Right cardiac atrium (tissue), 5 donors: ENCODE measurements at regions of chr16 and their contacts with region 1.

Region 1: GRCh38 chr16:4529085-4530060 is 9.2 kb downstream of the CDIP1 start:
- DNase-seq: no peak
- ATAC-seq: peak in 1 of 2 donors; percentile 16
- H3K4me3 ChIP-seq: no peak overlapping the region
- H3K27ac ChIP-seq: no peak overlapping the region
- H3K4me1 ChIP-seq: peaks cover 15% of the 10 kb centered on the region
- H3K27me3 ChIP-seq: no peaks in the 10 kb centered on the region

Region 2: DNA sequence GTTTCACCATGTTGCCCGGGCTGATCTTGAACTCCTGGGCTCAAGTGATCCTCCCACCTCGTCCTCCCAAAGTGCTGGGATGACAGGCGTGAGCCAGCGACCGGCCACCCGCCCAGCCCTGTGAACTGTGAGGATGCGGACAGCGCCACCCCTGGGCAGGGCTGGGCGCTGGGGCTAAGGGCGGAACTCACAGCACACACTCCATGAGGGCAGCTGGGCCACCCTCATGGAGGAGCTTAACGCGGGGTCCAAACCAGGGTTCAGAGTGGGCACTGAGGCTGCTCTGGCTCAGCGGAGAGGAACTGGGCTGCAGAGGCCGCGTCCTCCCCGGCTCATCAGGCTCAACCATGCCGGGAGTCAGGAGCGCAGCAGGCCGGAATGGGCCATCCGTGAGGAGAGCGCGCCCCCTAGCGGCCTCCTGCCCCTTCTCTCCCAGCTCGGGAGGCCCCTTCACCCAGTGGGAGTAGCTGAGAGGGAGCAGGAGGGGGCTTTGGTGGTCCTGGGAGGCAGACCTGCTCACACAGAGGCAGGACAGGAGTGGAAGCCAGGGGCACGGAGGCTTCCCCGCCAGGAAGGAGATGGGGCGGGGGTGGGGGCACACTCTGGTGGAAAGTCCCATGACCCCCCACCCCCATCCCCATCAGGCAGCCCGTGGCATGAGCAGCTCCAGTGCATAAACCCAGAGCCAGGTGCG is 126.8 kb before region 1 on chr16:
- intact Hi-C with region 1: no loop called
- DNase-seq: peak; percentile 85 to 95 (median 94)
- ATAC-seq: peak; percentile 93
- H3K4me3 ChIP-seq: no peak overlapping the region
- H3K27ac ChIP-seq: no peak overlapping the region
- H3K4me1 ChIP-seq: no peaks in the 10 kb centered on the region
- H3K27me3 ChIP-seq: no peaks in the 10 kb centered on the region

Region 3: DNA sequence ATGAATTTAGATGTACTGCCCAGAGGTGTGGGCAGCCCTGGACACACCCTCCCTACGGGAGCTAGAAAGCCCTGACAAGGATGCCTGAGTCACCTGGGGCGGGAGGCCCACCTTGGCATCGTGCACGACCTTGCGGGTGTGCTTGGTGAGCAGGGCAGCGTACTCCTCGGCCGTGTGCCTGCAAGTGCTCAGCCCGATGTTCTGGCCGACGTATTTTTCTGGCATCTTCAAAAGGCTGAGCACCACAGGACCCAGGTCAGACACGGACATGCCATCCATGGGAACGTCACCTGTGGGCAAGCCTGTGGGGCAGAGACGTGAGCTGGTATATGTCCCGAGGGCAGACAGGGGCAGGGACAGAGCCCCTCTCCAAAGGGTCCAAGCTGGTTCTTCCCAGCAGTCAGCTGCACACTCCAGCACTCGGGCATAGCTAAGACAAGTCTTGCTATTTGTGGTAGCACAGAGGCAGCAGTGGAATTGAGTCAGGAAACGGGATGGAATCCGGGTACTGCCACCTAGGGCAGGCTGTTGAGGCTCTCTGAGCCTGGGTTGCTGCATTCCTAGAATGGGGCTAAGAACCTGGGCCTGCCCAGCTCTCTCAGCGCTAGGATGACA is 65.7 kb before region 1 on chr16:
- intact Hi-C with region 1: no loop called
- DNase-seq: no peak
- ATAC-seq: peak in 1 of 2 donors; percentile 5
- H3K4me3 ChIP-seq: no peak overlapping the region
- H3K27ac ChIP-seq: no peak overlapping the region
- H3K4me1 ChIP-seq: no peaks in the 10 kb centered on the region
- H3K27me3 ChIP-seq: no peaks in the 10 kb centered on the region

Region 4: GRCh38 chr16:4475880-4476788 is 53.2 kb before region 1 on chr16 and contains the start of gene HMOX2:
- intact Hi-C with region 1: loop called in 1 of 4 experiments (anchors 5 kb)
- DNase-seq: peak; percentile 92 to 97 (median 97)
- ATAC-seq: peak; percentile 96
- H3K4me3 ChIP-seq: peak within 1 kb of the TSS; percentile 81
- H3K27ac ChIP-seq: peak within 1 kb of the TSS; percentile 86
- H3K4me1 ChIP-seq: peaks cover 3% of the 10 kb centered on the region
- H3K27me3 ChIP-seq: no peaks in the 10 kb centered on the region
- total RNA-seq, gene HMOX2: 89.6 to 104 (median 93.5) TPM